Transverse colon (tissue), 4 donors: ENCODE measurements at regions of chr9 and their contacts with region 1.

Region 1: GRCh38 chr9:119689879-119690278 is 320.6 kb upstream of the BRINP1 start:
- DNase-seq: no peak
- H3K4me3 ChIP-seq: no peak overlapping the region
- H3K27ac ChIP-seq: no peak overlapping the region
- H3K4me1 ChIP-seq: no peaks in the 10 kb centered on the region
- H3K27me3 ChIP-seq: no peaks in the 10 kb centered on the region
- CTCF ChIP-seq: no peak
- EP300 ChIP-seq: no peak
- POLR2A ChIP-seq: no peak

Region 2: DNA sequence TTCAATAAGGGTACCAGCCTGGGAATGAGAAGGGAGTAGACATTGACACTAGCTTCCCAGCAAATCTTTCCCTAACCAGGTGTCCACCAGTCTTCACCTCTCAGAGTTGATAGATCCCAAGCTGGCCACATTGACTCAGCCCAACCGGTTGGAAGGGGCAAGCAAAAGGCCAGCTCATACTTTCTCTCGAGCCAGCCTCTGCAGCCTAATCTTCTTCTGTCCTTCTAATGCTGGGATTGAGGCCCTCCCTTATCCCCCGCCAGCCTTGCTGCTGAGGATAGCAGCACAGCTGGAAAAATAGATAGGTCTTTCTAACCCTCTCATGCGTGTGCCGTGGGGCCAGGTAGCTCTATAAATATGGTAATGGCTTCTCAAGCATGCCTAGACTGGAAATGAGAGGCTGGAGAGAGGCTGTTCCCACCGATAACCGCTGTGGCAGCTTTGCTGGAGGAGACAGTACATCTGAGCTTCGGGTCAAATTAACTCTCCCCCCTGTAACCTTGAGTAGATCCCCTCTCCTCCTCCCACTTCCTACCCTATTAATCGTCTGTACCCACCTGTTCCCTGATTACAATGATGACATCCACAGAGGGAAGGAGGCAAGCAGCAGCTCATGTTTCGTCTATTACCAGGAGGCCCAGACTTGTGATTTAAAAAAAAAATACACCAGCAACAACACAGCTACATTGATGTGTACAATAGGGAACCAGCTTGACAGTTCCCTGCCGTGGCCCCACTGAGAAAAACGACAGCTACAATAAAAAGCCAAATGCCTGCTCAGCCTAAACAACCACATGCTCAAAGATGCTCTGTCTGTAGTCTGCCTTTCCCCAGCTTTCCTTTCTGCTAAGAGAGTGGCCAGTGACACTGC is 100.8 kb before region 1 on chr9:
- in situ Hi-C with region 1: loop called in 1 of 4 experiments (anchors 25 kb)
- intact Hi-C with region 1: no loop called
- DNase-seq: no peak
- H3K4me3 ChIP-seq: no peak overlapping the region
- H3K27ac ChIP-seq: no peak overlapping the region
- H3K4me1 ChIP-seq: no peaks in the 10 kb centered on the region
- H3K27me3 ChIP-seq: no peaks in the 10 kb centered on the region
- CTCF ChIP-seq: no peak
- EP300 ChIP-seq: no peak
- POLR2A ChIP-seq: no peak

Region 3: GRCh38 chr9:119792242-119792641 is 102.4 kb after region 1 on chr9:
- in situ Hi-C with region 1: loop called in 1 of 4 experiments (anchors 25 kb)
- intact Hi-C with region 1: no loop called
- DNase-seq: no peak
- H3K4me3 ChIP-seq: no peak overlapping the region
- H3K27ac ChIP-seq: no peak overlapping the region
- H3K4me1 ChIP-seq: no peaks in the 10 kb centered on the region
- H3K27me3 ChIP-seq: no peaks in the 10 kb centered on the region
- CTCF ChIP-seq: no peak
- EP300 ChIP-seq: no peak
- POLR2A ChIP-seq: no peak